ENCODE measurements at regions of chr10 and their contacts with region 1.

Region 1: DNA sequence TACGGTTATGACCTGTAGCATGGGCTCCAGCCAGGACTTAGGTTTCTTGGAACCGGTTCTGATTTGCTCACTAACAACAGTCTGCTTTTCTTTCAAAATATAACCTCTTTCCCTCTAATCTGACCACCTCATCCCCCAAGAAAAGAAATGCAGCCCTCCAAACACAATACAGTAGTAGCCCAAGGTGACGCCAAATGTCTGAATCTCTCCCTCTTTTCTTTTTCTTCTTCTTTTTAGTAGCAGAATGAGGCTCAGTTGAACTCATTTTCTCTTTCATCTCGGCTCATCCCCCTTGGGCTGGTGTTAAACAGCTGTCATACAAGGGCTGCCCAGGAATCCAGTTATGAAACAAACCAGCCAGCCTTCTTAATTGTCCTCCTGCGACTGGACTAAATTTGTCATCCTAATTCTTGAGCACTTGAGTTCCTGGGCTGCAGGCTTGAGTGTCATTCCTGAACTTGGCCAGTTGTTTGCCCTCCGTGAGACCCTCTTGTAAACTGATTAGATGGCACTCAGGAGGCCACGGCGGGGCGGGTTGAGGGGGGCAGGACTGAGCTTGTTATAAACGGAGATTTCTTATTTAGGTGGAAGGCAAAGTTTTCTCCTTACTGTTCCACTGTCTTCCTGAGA is 94.8 kb downstream of the SORCS3 start:
- DNase-seq: peak; percentile 60
- ATAC-seq: peak; percentile 62

Region 2: DNA sequence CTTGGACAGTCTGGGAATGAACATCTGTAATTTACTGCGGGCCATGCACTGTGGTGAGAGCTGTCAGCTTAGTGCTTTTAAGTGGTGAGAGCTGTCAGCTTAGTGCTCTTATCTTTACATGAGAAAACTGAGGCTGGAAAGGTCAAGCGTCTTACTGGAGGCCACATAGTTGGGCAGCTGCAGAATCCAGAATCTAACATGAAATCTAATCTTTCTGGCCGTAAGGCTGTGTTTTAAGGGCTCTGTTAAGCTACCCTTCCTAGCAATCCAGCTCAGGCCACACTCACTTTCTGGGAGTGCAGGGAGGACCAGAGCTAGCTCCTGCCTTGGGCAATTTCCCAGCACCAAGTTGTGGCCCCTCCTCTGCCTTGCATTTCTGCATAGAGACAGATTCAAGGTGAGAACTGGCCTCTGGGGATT is 24.6 kb before region 1 on chr10:
- intact Hi-C with region 1: loop called (anchors 1 kb)
- DNase-seq: no peak
- ATAC-seq: peak; percentile 85

Measured in Right ventricle myocardium inferior (tissue), 1 donor.